ENCODE measurements at regions of chr4 and their contacts with region 1.

Region 1: DNA sequence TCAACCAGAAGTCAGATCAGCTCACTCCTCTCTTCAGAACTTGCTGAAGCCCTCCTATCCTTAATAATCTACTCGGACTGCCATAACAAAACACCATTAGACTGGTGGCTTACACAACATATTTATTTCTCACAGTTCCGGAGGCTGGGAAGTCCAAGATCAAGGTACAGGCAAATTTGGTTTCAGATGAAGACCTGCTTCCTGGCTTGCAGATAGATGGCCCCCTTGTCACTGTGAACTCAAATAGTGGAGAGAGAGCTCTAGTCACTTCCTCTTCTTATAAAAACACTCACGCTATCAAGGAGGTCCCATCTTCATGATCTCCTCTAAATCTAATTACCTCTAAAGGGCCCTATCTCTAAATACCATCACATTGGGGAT is 125.1 kb downstream of the CAMK2D start:
- DNase-seq: no peak
- ATAC-seq: peak in 2 of 4 donors; percentile 6
- H3K4me3 ChIP-seq: no peak overlapping the region
- H3K27ac ChIP-seq: peak overlapping the region; percentile 62 to 95 (median 77)
- H3K4me1 ChIP-seq: peaks cover 0 to 90% (median 70%) of the 10 kb centered on the region in 12 donors
- H3K27me3 ChIP-seq: no peaks in the 10 kb centered on the region
- CTCF ChIP-seq: peak in 3 of 12 donors; percentile 6 to 35 (median 19)
- POLR2A ChIP-seq: no peak

Region 2: GRCh38 chr4:113547487-113548042 is 88.9 kb before region 1 on chr4:
- intact Hi-C with region 1: loop called in 4 of 10 experiments (anchors 5 to 10 kb)
- DNase-seq: peak; percentile 83 to 90 (median 86)
- ATAC-seq: peak; percentile 94 to 99 (median 98)
- H3K4me3 ChIP-seq: no peak overlapping the region
- H3K27ac ChIP-seq: peak overlapping the region in 11 of 12 donors; percentile 23 to 75 (median 56)
- H3K4me1 ChIP-seq: peaks cover 0 to 19% (median 12%) of the 10 kb centered on the region in 12 donors
- H3K27me3 ChIP-seq: no peaks in the 10 kb centered on the region
- CTCF ChIP-seq: peak; percentile 91 to 99 (median 97)
- POLR2A ChIP-seq: no peak

Region 3: GRCh38 chr4:113584407-113585150 is 51.8 kb before region 1 on chr4:
- intact Hi-C with region 1: loop called in 1 of 10 experiments (anchors 10 kb)
- DNase-seq: peak in 2 of 5 donors; percentile 36 to 61
- ATAC-seq: peak in 3 of 4 donors; percentile 49 to 67 (median 49)
- H3K4me3 ChIP-seq: no peak overlapping the region
- H3K27ac ChIP-seq: peak overlapping the region; percentile 30 to 93 (median 80)
- H3K4me1 ChIP-seq: peaks cover 5 to 68% (median 36%) of the 10 kb centered on the region in 12 donors
- H3K27me3 ChIP-seq: no peaks in the 10 kb centered on the region
- CTCF ChIP-seq: no peak
- POLR2A ChIP-seq: no peak

Region 4: DNA sequence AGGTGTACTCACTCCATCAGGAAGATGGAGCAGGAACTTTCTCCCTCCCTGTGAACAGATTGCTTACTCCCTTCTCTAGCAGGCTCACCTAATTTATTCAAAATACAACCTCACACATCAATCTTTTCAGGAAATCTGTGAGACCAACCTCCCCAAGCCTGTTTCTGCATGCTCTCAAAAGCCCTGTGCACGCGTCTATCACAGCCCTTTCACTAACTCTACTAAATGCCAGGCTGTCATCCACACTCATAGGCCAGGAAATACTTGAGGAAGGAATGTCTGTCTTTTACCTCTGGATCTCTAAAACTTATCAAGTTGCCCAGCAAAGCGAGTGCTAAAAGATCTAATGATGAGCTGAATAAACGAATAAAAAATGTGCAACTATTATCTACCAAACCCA is 113.9 kb after region 1 on chr4:
- intact Hi-C with region 1: loop called in 2 of 10 experiments (anchors 5 kb)
- DNase-seq: no peak
- ATAC-seq: peak in 3 of 4 donors; percentile 30 to 51 (median 39)
- H3K4me3 ChIP-seq: no peak overlapping the region
- H3K27ac ChIP-seq: peak overlapping the region in 1 of 12 donors; percentile 13
- H3K4me1 ChIP-seq: peaks cover 0 to 61% (median 26%) of the 10 kb centered on the region in 12 donors
- H3K27me3 ChIP-seq: no peaks in the 10 kb centered on the region
- CTCF ChIP-seq: no peak
- POLR2A ChIP-seq: no peak